CD4-positive, alpha-beta memory T cell (primary cell): ENCODE measurements at regions of chr6 and their contacts with region 1.

Region 1: GRCh38 chr6:33711140-33712129 is at the start of gene UQCC2:
- DNase-seq: peak; percentile 96 to 97 (median 96)
- H3K4me3 ChIP-seq: peak within 1 kb of the TSS; percentile 58 to 89
- H3K4me3 Mint-ChIP-seq: peak within 1 kb of the TSS; percentile 96 to 99 (median 98)
- H3K27ac ChIP-seq: peak within 1 kb of the TSS; percentile 84
- H3K27ac Mint-ChIP-seq: peak within 1 kb of the TSS; percentile 93 to 99 (median 98)
- H3K4me1 ChIP-seq: peaks cover 22% of the 10 kb centered on the region
- H3K4me1 Mint-ChIP-seq: peaks cover 20 to 32% (median 27%) of the 10 kb centered on the region in 4 donors
- H3K27me3 ChIP-seq: no peaks in the 10 kb centered on the region
- H3K27me3 Mint-ChIP-seq: no peaks in the 10 kb centered on the region
- total RNA-seq, gene UQCC2: 22.8 to 24.8 TPM

Region 2: GRCh38 chr6:33454009-33454946 is 257.2 kb before region 1 on chr6 and contains the start of gene ZBTB9:
- CTCF ChIA-PET with region 1: no interaction called
- POLR2A ChIA-PET with region 1: no interaction called
- intact Hi-C with region 1: loop called (anchors 10 kb)
- DNase-seq: peak; percentile 92 to 96 (median 92)
- H3K4me3 ChIP-seq: peak within 1 kb of the TSS; percentile 84 to 89
- H3K4me3 Mint-ChIP-seq: peak within 1 kb of the TSS; percentile 93 to 99 (median 97)
- H3K27ac ChIP-seq: peak within 1 kb of the TSS; percentile 78
- H3K27ac Mint-ChIP-seq: peak within 1 kb of the TSS; percentile 82 to 98 (median 95)
- H3K4me1 ChIP-seq: peaks cover 29% of the 10 kb centered on the region
- H3K4me1 Mint-ChIP-seq: peaks cover 14 to 43% (median 29%) of the 10 kb centered on the region in 4 donors
- H3K27me3 ChIP-seq: no peaks in the 10 kb centered on the region
- H3K27me3 Mint-ChIP-seq: no peaks in the 10 kb centered on the region
- total RNA-seq, gene ZBTB9: 12.1 to 12.8 TPM

Region 3: GRCh38 chr6:33620856-33621710 is 90.4 kb before region 1 on chr6 and contains the start of gene ITPR3:
- CTCF ChIA-PET with region 1: no interaction called
- POLR2A ChIA-PET with region 1: interaction called, 15 read pairs
- intact Hi-C with region 1: loop called (anchors 1 kb)
- DNase-seq: peak; percentile 78 to 85 (median 83)
- H3K4me3 ChIP-seq: peak within 1 kb of the TSS; percentile 71 to 88
- H3K4me3 Mint-ChIP-seq: peak within 1 kb of the TSS; percentile 93 to 99 (median 96)
- H3K27ac ChIP-seq: peak within 1 kb of the TSS; percentile 92
- H3K27ac Mint-ChIP-seq: peak within 1 kb of the TSS; percentile 91 to 98 (median 97)
- H3K4me1 ChIP-seq: peaks cover 48% of the 10 kb centered on the region
- H3K4me1 Mint-ChIP-seq: peaks cover 35 to 62% (median 48%) of the 10 kb centered on the region in 4 donors
- H3K27me3 ChIP-seq: no peaks in the 10 kb centered on the region
- H3K27me3 Mint-ChIP-seq: no peaks in the 10 kb centered on the region
- total RNA-seq, gene ITPR3: 71.2 to 72.4 TPM

Region 4: DNA sequence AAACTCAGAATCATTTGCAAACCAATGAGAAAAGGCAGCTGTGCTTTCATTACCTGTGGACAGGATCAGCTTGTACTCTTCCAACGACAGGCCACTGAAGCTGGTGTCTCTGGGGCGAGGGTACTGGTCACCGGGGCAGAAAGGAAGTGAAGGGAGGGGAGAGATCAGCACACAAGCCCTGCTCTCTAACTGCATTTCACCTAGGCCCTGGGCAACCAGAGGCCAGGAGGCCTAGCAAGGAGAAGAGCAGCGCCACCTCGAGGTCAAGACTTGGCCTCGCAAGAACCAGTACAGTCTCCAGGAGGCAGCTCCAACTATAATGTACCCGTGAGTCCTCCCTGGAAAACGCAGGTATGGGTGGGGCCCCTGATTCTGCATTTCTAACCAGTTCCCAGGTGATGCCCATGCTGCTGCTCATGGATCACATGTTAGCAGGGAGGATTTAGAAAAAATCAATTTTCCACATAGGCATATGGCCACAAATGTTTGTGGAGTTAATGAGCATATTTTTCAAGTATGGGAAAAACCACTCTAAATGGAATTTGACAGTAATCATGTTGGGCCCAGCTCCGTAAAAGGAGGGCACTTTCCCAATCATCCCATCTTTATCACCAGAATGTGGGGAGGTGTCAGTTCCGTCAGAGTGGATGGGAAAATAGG is 10.9 kb before region 1 on chr6:
- CTCF ChIA-PET with region 1: interaction called, 19 read pairs
- POLR2A ChIA-PET with region 1: interaction called, 17 read pairs
- intact Hi-C with region 1: loop called (anchors 1 kb)
- DNase-seq: peak; percentile 69 to 77 (median 71)
- H3K4me3 ChIP-seq: no peak overlapping the region
- H3K4me3 Mint-ChIP-seq: peak overlapping the region in 1 of 8 donors; percentile 53
- H3K27ac ChIP-seq: peak overlapping the region; percentile 12
- H3K27ac Mint-ChIP-seq: peak overlapping the region; percentile 35 to 93 (median 90)
- H3K4me1 ChIP-seq: peaks cover 32% of the 10 kb centered on the region
- H3K4me1 Mint-ChIP-seq: peaks cover 21 to 49% (median 33%) of the 10 kb centered on the region in 4 donors
- H3K27me3 ChIP-seq: no peaks in the 10 kb centered on the region
- H3K27me3 Mint-ChIP-seq: no peaks in the 10 kb centered on the region

Region 5: GRCh38 chr6:33788694-33789549 is 77.5 kb after region 1 on chr6 and contains the start of gene LEMD2:
- CTCF ChIA-PET with region 1: interaction called, 4 read pairs
- POLR2A ChIA-PET with region 1: no interaction called
- intact Hi-C with region 1: loop called (anchors 1 kb)
- DNase-seq: peak; percentile 88 to 94 (median 90)
- H3K4me3 ChIP-seq: peak within 1 kb of the TSS; percentile 48 to 77
- H3K4me3 Mint-ChIP-seq: peak within 1 kb of the TSS; percentile 90 to 100 (median 98)
- H3K27ac ChIP-seq: peak within 1 kb of the TSS; percentile 90
- H3K27ac Mint-ChIP-seq: peak within 1 kb of the TSS; percentile 90 to 100 (median 99)
- H3K4me1 ChIP-seq: peaks cover 42% of the 10 kb centered on the region
- H3K4me1 Mint-ChIP-seq: peaks cover 35 to 53% (median 45%) of the 10 kb centered on the region in 4 donors
- H3K27me3 ChIP-seq: no peaks in the 10 kb centered on the region
- H3K27me3 Mint-ChIP-seq: peaks cover 0 to 5% of the 10 kb centered on the region in 2 donors
- total RNA-seq, gene LEMD2: 115 to 126 TPM

Region 6: DNA sequence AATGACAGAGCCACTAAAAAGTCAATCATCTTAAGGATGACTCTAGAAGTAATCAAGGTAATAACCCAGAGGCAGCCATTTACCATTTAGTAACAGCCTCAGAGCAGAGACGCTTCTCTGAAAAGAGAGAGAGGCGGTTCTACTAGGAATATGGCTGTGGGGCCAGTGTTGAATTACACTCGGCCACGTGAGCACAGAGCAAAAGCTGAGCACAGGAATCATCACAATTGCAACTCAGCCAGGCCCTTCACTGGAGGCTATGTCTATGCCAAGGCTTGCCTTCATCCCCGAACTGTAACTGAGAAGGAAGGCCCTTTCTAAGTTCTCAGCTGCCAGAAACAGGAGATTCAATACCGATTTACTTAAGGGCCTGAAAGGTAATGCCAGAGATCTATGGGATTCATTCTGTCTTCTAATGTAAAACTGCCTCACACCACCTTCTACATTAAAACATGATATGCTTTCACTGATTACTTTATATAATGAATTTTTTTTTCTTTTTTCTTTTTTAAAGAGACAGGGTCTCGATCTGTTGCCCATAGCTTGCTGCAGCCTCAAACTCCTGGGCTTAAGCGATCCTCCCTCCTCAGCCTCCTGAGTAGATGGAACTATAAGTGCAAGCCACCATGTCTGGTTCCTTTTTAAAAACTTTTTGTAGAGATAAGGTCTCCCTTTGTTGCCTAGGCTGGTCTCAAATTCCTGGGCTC is 613.5 kb after region 1 on chr6:
- CTCF ChIA-PET with region 1: no interaction called
- POLR2A ChIA-PET with region 1: no interaction called
- intact Hi-C with region 1: no loop called
- DNase-seq: no peak
- H3K4me3 ChIP-seq: no peak overlapping the region
- H3K4me3 Mint-ChIP-seq: no peak overlapping the region
- H3K27ac ChIP-seq: no peak overlapping the region
- H3K27ac Mint-ChIP-seq: no peak overlapping the region
- H3K4me1 ChIP-seq: peaks cover 3% of the 10 kb centered on the region
- H3K4me1 Mint-ChIP-seq: peaks cover 1 to 16% (median 7%) of the 10 kb centered on the region in 4 donors
- H3K27me3 ChIP-seq: no peaks in the 10 kb centered on the region
- H3K27me3 Mint-ChIP-seq: no peaks in the 10 kb centered on the region